ENCODE measurements at regions of chr17 and their contacts with region 1.

Region 1: DNA sequence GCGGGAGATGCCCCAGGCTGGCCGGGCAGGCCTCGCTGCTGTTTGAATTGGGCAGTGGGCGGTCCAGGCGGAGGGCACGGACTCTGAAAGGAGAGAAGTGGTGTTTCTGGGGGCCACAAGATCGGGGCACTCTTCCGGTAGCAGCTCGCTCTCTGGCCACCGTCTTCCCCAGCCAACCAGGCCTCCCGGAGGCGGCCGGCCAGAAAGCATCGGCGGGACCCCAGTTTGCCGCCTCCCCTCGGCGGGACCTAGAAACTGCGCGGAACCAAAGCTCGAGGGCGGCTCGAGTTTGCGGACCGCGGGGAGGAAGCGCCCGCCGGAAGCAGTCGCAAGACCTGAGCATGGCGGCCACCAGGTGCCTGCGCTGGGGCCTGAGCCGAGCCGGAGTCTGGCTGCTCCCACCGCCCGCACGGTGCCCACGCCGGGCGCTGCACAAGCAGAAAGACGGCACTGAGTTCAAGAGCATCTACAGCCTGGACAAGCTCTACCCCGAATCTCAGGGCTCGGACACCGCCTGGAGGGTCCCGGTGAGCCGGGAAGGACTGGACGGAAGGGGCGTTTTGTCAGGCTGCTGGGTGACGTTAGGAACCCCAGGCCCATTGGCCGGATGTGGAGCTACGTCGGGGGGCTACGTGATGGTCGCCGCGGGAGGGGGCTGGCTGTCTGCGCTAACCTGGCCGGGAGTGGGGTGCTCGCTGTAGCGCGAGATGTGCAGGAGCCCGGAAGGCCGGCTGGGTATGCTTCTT is at the start of gene MRPL58:
- DNase-seq: peak; percentile 90

Region 2: GRCh38 chr17:73991254-73991653 is 1021.3 kb before region 1 on chr17:
- CTCF ChIA-PET with region 1: no interaction called
- POLR2A ChIA-PET with region 1: no interaction called
- DNase-seq: no peak

Region 3: DNA sequence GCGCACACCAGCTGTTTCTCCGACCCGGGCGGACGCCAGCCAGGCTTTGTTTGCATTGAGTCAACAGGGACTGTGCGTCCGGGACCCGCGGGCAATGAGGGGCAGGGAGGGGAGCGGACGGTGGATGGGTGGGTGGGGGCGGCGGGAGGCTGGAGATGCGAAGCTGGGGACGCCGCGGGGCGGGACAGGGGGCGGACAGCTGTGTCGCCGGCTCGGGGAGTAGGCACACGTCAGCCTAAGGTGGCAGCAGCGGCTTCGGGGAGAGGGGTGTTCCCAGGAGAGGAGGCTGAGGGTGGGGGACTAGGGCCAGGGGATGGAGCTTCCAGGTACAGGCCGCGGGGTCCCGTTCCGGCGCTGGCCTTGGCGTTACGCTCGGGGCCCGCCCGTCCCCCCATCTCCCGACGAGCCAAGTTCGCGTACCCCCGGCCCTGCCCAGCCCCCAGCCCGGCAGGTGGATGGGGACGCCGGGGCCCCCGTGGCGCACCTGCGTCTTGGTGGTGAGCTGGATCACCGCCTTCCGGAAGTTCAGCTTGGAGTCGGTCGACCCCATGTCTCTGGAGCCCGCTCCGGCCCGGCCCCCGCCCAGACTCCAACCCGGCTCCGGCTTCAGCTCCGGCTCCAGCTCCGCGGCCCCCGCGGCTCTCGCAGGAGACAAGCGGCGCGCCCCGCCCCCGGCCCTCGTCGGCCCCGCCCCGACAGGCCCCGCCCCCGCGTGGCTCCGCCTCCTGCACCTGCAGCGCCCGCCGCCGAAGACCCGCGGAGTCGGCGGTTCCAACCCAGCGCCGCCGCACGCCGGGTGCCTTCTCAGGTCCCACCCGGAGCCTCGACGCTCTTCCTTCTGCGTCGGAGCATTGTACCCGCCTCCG is 40.2 kb before region 1 on chr17 and contains the start of gene HID1:
- CTCF ChIA-PET with region 1: no interaction called
- POLR2A ChIA-PET with region 1: interaction called, 60 read pairs
- DNase-seq: peak; percentile 93

Region 4: GRCh38 chr17:74993453-74994021 is 19.0 kb before region 1 on chr17:
- CTCF ChIA-PET with region 1: interaction called, 3 read pairs
- POLR2A ChIA-PET with region 1: interaction called, 169 read pairs
- DNase-seq: no peak

Region 5: DNA sequence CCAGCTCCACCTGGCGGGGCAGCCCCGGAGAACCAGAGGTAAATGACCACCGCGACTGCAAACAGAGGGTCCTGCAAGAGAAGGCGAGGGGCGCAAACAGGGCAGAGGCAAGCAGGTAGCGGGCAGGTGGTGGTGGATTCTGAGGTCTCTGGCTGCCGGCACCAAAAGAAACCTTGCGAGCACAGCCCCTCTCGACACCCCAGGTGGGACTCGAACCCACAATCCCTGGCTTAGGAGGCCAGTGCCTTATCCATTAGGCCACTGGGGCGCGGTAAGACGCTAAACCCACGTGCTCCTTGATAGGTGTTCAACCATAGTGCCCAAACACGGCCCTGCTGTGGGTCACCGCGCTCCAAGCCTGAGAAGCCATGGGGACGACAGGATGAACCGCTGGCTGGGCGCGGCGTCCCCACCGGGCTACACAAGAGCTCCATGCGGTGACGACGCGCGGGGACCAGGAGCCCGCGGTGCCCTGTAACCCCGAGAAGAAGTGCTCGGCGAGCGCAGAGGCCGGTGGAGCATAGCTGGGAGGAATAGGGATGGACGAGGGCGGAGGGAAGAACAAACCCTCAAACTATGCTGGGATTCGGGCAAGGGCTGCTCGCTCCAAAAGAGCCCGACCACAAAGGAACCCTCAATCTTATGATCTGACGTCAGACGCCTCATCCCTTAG is 21.9 kb after region 1 on chr17:
- CTCF ChIA-PET with region 1: interaction called, 5 read pairs
- POLR2A ChIA-PET with region 1: interaction called, 82 read pairs
- DNase-seq: peak; percentile 69

Region 6: DNA sequence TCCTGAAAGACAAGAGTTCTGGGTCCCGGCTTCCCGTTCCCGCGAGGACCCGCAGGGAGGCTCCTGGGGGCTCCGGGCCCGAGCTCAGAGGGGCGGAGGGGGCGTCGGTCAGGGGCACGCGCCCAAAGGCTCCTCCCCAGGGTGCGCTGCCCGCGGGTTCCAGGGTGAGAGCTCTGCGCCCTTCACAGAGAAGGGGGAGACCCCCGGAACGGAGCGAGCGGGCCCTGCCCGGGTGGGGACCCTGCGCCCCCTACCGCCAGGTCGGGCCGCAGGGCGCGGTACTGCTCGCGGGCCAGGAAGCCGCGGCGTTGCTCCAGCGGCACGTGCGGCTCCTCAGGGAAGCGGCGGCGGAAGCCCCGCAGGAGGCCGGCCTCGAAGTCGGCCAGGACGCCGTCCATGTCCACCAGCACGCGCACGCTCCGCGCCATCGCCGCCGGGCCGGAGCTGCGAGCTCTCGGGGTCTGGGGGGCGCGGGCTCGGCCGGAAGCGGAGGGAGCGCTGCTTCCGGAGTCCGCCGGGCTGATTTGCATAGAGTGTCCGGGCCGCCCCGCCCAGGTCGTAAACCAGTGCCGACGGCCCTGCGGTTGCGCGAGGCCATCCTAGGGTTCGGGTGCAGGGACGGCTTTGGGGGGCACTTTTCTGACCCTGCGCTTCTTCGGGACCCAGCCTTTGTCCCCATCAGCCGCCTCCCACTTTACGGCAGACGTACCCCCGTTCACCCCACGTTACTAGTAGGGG is 118.9 kb after region 1 on chr17 and contains the start of gene NT5C:
- CTCF ChIA-PET with region 1: interaction called, 3 read pairs
- POLR2A ChIA-PET with region 1: interaction called, 10 read pairs
- DNase-seq: peak; percentile 91